PC-9 (cell line): ENCODE measurements at regions of chr5 and their contacts with region 1.

Region 1: GRCh38 chr5:60687927-60688720 is 11.8 kb downstream of the DEPDC1B start:
- DNase-seq: no peak
- H3K4me3 ChIP-seq: no peak overlapping the region
- H3K27ac ChIP-seq: no peak overlapping the region
- H3K4me1 ChIP-seq: no peaks in the 10 kb centered on the region
- H3K27me3 ChIP-seq: no peaks in the 10 kb centered on the region
- CTCF ChIP-seq: peak; percentile 39

Region 2: GRCh38 chr5:60668686-60669304 is 19.3 kb before region 1 on chr5:
- CTCF ChIA-PET with region 1: no interaction called
- POLR2A ChIA-PET with region 1: no interaction called
- intact Hi-C with region 1: no loop called
- DNase-seq: peak in 1 of 2 experiments; percentile 45
- H3K4me3 ChIP-seq: no peak overlapping the region
- H3K27ac ChIP-seq: no peak overlapping the region
- H3K4me1 ChIP-seq: no peaks in the 10 kb centered on the region
- H3K27me3 ChIP-seq: no peaks in the 10 kb centered on the region
- CTCF ChIP-seq: peak; percentile 76

Region 3: DNA sequence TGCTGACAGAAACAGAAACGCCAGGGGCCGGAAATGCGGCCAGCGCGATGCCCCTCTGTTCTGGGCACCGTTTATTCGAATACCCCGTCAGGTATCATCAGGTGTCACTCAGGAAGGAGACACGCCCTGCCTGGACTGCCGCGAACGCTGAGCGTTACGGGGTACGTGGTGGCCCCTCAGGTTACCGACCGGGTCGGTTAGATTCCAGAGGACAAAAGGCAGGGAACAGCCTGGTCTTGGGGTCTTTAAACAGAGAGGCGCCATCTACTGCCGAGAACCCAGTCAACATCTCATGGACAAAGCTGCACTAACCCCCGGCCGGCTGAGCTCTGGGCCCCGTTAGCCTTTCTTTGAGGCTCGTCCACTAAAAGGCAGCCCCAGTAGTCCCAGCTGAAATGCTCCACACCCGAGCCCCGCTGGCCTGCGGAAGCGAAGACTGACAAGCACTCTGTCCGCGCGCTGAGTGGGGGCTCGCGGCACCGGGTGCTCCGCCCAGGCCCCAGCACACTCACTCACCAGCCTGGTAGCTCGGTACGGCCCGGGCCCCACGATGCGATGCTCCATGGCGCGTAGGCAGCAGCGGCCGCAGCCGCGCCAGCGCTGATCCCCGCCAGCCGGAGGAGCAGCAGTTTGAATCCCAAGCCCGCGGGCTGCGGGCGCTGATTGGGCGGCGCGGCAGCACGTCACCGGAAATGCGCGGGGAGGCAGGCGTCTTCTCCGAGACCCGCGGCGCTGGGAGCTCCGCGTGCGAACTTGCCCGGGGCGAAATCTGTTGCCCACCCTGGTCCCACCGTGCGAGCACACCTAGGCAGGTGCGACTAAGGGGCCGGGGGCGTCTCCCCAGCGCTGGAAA is 11.6 kb after region 1 on chr5 and contains the start of gene DEPDC1B:
- CTCF ChIA-PET with region 1: interaction called, 15 read pairs
- POLR2A ChIA-PET with region 1: interaction called, 4 read pairs
- intact Hi-C with region 1: no loop called
- DNase-seq: peak; percentile 70 to 88
- H3K4me3 ChIP-seq: peak within 1 kb of the TSS; percentile 76
- H3K27ac ChIP-seq: peak within 1 kb of the TSS; percentile 55
- H3K4me1 ChIP-seq: peaks cover 11% of the 10 kb centered on the region; the same call in 1 of the 2 replicates
- H3K27me3 ChIP-seq: no peaks in the 10 kb centered on the region
- CTCF ChIP-seq: no peak; the same call in 1 of the 2 replicates
- total RNA-seq, gene DEPDC1B: 25.6 and 29.2 TPM in 2 replicates

Region 4: DNA sequence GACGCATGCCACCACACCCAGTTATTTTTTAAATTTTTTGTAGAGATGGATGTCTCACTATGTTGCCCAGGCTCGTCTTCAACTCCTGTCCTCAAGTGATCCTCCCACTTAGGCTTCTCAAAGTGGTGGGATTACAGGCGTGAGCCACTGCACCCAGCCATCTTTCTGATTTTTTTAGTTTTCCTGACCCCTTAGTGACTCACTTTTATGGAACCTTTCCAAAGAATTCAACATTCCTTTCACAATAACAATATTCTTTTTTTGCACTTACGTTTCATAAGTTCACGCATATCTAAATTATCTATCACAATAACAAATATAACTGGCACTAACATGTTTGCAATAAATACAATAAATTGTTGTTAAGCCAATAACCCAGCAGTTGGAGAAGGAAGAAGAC is 147.4 kb after region 1 on chr5:
- CTCF ChIA-PET with region 1: no interaction called
- POLR2A ChIA-PET with region 1: no interaction called
- intact Hi-C with region 1: no loop called
- DNase-seq: no peak
- H3K4me3 ChIP-seq: no peak overlapping the region
- H3K27ac ChIP-seq: no peak overlapping the region
- H3K4me1 ChIP-seq: no peaks in the 10 kb centered on the region
- H3K27me3 ChIP-seq: no peaks in the 10 kb centered on the region
- CTCF ChIP-seq: no peak